Heart right ventricle (tissue), 16 donors: ENCODE measurements at regions of chr1 and their contacts with region 1.

Region 1: DNA sequence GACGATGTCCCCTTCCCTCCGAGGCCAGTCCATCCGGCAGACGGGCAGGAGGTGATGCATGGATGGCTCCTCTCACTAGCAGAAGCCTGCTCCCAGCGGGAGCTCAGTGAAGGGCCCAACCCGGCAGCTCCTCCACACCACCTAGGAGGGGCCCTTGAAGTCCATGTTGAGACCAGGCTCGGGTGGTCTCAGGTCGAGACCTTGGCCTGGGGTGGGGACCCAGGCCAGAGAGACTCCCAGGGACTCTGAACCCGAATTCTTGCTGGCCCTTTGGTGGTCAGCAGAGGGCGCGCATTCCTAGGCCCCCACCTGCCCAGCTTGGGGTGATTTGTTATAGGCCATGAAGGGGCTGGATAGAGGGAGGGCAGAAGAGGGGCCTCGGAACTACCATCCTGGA is 642 bp upstream of the NT5C1A start:
- DNase-seq: no peak
- ATAC-seq: peak in 6 of 8 donors; percentile 17 to 39 (median 22)
- H3K4me3 ChIP-seq: peak overlapping the region; percentile 51 to 72 (median 59)
- H3K27ac ChIP-seq: peak overlapping the region in 7 of 10 donors; percentile 75 to 89 (median 84)
- H3K4me1 ChIP-seq: peaks cover 0 to 52% (median 33%) of the 10 kb centered on the region in 9 donors
- H3K27me3 ChIP-seq: peaks cover 0 to 33% (median 12%) of the 10 kb centered on the region in 7 donors
- CTCF ChIP-seq: peak in 8 of 9 donors; percentile 26 to 63 (median 54)

Region 2: DNA sequence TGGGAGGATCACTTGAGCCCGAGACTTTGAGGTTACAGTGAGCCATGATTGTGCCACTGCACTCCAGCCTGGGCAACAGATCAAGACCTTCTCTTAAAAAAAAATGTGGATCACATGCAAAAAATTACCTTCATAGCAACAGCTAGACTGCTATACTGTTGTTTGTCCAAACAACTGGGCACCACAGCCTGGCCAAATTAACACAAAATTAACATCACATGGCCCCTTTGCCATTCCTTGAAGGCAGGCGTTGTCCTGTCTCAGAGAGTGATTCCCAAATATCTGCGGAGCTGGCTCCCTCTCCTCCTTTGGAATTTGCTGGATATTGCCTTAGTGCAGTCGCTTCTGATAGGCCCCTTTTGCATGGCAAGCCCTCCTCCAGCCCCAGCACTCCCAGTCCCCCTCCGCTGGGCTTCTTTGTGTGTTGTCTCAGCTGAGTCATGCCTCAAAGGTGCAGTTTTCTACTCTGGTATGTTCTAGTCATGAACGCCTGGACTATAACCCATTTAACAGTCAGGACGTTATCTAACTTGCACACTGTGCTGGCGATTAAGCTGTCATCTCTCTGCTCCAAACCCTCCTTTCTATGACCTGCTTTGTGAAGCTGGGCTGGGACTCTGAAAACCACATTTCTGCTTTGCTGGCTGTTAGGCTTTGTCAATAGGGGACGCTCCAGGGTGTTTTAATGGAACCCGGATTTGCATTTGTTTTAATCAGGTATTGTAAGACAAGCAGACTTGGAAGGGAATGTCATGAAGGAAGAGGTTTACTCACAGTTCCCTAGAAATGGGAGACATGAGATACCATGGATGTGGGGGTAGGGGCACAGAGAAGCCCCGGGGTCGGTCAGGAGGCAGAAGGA is 38.8 kb after region 1 on chr1:
- intact Hi-C with region 1: loop called in 2 of 10 experiments (anchors 5 to 10 kb)
- DNase-seq: no peak
- ATAC-seq: no peak
- H3K4me3 ChIP-seq: no peak overlapping the region
- H3K27ac ChIP-seq: no peak overlapping the region
- H3K4me1 ChIP-seq: peaks cover 0 to 3% (median 0%) of the 10 kb centered on the region in 9 donors
- H3K27me3 ChIP-seq: peaks cover 0 to 21% (median 17%) of the 10 kb centered on the region in 7 donors
- CTCF ChIP-seq: no peak

Region 3: GRCh38 chr1:39720094-39720999 is 47.8 kb after region 1 on chr1:
- intact Hi-C with region 1: loop called in 2 of 10 experiments (anchors 5 to 10 kb)
- DNase-seq: no peak
- ATAC-seq: peak in 5 of 8 donors; percentile 47 to 72 (median 59)
- H3K4me3 ChIP-seq: no peak overlapping the region
- H3K27ac ChIP-seq: no peak overlapping the region
- H3K4me1 ChIP-seq: peaks cover 0 to 4% (median 0%) of the 10 kb centered on the region in 9 donors
- H3K27me3 ChIP-seq: peaks cover 0 to 51% (median 30%) of the 10 kb centered on the region in 7 donors
- CTCF ChIP-seq: peak; percentile 56 to 82 (median 73)

Region 4: DNA sequence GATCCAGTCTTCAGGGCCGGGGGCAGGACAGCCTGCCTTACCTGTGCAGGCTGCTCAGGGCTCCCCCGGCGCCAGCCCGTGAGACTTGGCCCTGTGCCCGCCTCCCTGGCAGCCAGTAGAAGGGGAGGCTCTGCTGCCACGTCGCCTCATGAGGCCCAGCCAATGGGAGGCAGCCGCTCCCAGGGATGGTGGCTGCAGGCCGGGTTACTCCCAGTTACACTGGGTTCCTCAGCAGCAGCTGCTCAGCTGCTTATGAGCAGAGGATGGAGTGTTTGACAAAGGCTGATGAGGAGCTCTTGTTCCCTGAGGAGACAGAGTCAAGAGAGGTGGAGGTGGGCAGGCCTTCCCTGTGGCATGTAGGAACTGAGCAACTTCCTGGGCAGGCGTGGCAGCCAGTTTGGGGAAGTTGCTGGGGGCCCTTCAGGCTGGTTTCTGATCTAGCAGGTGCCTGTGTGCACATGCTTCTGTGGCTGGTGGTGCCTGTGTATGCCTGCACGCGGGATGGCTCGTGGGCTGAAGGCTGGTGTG is 287.9 kb after region 1 on chr1:
- intact Hi-C with region 1: no loop called
- DNase-seq: peak in 1 of 2 donors; percentile 13
- ATAC-seq: peak in 5 of 8 donors; percentile 5 to 53 (median 34)
- H3K4me3 ChIP-seq: peak overlapping the region in 1 of 10 donors; percentile 20
- H3K27ac ChIP-seq: peak overlapping the region in 1 of 10 donors; percentile 79
- H3K4me1 ChIP-seq: peaks cover 6 to 34% (median 10%) of the 10 kb centered on the region in 9 donors
- H3K27me3 ChIP-seq: peaks cover 0 to 17% (median 8%) of the 10 kb centered on the region in 7 donors
- CTCF ChIP-seq: no peak